Ascending aorta (tissue), 2 donors: ENCODE measurements at regions of chr13 and their contacts with region 1.

Region 1: GRCh38 chr13:114099191-114099590 is 33.2 kb downstream of the RASA3 start:
- DNase-seq: peak; percentile 79 to 94
- H3K4me3 ChIP-seq: peak overlapping the region in 1 of 2 donors; percentile 25
- H3K27ac ChIP-seq: peak overlapping the region; percentile 43 to 70
- H3K4me1 ChIP-seq: peaks cover 10 to 24% of the 10 kb centered on the region in 2 donors
- H3K27me3 ChIP-seq: no peaks in the 10 kb centered on the region
- CTCF ChIP-seq: no peak

Region 2: DNA sequence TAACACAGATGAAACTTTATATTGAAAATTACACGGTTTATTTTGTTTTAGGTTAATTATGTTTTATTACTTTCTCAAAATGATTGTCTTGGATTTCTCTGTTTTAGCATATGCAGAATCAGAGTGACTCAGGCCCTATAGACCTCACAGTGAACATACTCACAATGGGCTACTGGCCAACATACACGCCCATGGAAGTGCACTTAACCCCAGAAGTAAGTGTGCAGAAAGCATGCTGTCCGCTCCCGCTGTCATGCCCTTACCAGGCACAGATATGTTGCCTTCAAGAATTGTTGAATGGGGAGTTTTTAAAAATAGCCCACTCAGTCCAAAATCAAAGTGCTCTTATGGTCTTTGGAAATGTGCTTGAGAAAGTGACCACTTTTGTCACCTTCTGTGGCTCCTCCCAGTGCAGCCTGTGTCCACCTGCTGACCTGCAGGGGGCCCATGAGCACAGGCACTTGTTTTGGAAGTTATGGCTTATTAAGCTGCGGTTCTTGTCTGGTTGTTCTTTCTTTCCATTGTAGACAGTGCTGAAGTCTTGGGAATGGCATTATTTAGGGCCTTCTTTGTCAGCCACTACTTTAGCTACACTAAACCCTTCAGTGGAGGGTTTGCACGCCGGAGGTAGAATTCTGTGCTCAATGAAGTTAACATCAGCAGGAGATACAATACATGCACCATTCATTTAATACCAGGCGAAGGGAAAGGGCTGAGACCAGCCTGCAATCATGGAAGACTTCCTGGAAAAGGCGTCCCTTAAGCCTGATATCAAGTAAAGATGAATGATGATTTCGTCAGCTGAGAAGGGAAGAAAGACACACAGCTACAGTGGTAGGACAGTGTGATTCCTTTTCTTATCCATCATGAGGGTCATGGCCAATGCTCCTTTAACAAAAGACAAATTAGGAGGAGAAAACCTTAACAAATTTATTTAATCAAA is 853.1 kb before region 1 on chr13:
- intact Hi-C with region 1: no loop called
- DNase-seq: peak in 1 of 2 donors; percentile 44
- H3K4me3 ChIP-seq: no peak overlapping the region
- H3K27ac ChIP-seq: no peak overlapping the region
- H3K4me1 ChIP-seq: no peaks in the 10 kb centered on the region
- H3K27me3 ChIP-seq: no peaks in the 10 kb centered on the region
- CTCF ChIP-seq: no peak

Region 3: DNA sequence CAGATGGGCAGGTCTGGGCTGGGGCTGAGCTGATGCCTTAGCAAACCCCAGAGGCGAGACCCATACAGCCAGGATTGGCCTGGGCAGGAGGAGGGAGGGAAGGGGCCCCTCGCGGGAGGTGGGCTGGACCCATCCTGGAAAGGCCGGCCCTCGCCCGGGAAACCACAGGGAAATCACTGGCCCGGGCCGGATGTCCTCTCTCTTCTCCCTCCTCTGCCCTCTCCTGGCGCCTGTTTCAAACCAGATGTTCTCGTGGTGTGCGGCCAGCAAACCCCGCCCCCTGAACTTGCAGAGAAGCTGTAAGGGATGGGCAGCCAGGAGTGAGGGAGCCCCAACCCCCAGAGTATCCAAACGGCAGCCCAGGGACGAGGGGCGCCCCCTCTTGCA is 297.1 kb before region 1 on chr13:
- intact Hi-C with region 1: no loop called
- DNase-seq: no peak
- H3K4me3 ChIP-seq: no peak overlapping the region
- H3K27ac ChIP-seq: no peak overlapping the region
- H3K4me1 ChIP-seq: no peaks in the 10 kb centered on the region
- H3K27me3 ChIP-seq: no peaks in the 10 kb centered on the region
- CTCF ChIP-seq: no peak

Region 4: GRCh38 chr13:113951246-113951999 is 147.8 kb before region 1 on chr13:
- intact Hi-C with region 1: no loop called
- DNase-seq: peak; percentile 30 to 92
- H3K4me3 ChIP-seq: peak overlapping the region in 1 of 2 donors; percentile 41
- H3K27ac ChIP-seq: no peak overlapping the region
- H3K4me1 ChIP-seq: peaks cover 3 to 8% of the 10 kb centered on the region in 2 donors
- H3K27me3 ChIP-seq: no peaks in the 10 kb centered on the region
- CTCF ChIP-seq: peak; percentile 89 to 93 (median 91)

Region 5: DNA sequence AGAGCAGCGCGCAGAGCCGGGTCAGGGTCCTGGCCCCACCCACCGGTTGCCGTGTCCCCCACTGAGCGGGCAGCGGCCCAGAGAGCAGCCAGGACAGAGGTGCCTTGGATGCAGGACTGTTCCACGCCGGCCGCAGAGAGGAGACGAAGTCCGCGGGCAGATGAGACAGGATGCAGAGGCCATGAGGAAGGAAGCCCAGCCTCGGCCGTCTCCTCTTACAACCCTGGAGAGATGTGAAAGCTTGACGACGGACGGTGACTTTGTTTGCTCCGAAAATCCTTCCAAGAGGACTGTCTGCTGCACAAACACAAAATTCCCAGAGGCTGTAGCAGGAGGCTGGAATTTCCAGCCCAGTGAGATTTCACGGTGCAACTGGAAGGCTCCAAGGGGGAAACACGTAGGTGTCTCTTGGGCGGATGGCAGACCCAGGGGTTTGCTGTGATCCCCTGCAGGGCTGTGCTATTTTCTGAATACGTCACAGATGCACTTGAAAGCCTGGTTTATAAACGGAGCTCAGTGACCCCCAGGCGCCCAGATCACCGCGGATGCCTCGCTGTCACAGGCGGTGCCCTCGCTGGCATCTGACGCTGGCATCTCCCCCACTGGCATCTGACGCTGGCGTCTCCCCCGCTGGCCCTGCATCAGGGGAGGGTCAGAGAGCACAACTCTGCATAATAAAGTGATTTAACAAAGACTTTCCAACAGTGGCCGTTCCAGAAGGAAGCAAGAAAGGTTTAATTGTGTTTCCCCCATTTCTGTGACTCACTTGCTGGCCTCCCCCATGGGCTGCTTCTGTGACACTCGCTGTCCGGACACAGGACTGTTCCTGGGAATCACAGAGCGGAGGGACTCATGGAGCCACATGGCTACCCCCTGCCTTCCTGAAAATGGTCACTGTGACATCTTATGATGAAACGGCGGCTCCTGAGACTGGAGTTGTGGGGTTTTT is 63.3 kb before region 1 on chr13:
- intact Hi-C with region 1: no loop called
- DNase-seq: no peak
- H3K4me3 ChIP-seq: no peak overlapping the region
- H3K27ac ChIP-seq: peak overlapping the region in 1 of 2 donors; percentile 68
- H3K4me1 ChIP-seq: peaks cover 5 to 15% of the 10 kb centered on the region in 2 donors
- H3K27me3 ChIP-seq: no peaks in the 10 kb centered on the region
- CTCF ChIP-seq: no peak

Region 6: DNA sequence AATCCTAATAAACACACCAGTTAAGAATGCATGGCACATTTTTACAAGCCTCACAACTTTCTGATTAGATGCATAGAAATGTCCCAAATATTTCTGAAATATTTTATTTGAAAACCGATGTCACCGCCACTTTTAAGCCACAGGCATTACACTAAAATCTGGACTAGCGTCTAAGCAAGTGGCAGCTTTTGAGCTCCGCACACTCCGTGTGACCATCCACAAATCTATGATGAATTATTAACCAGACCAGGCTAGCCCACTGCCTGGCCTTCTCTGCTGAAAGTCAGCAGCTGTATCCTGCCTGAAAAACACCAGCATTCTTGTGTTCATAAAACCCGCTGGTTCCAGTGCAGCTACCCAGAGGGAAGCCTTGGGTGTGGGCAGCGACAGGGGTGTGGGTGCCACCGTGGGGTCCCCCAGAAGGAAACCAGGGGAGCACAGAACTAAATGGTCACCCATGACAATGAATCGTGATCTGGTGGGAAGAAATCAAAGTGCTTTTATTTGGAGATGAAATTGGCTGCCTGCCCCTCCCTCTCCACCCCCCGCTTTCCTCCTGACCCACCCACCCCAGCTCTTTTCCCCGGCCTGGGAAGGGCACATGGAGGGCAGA is 19.4 kb after region 1 on chr13:
- intact Hi-C with region 1: loop called (anchors 1 kb)
- DNase-seq: no peak
- H3K4me3 ChIP-seq: peak overlapping the region; percentile 30 to 56
- H3K27ac ChIP-seq: peak overlapping the region; percentile 93 to 95
- H3K4me1 ChIP-seq: peaks cover 4 to 14% of the 10 kb centered on the region in 2 donors
- H3K27me3 ChIP-seq: no peaks in the 10 kb centered on the region
- CTCF ChIP-seq: no peak